A549 (cell line): ENCODE measurements at regions of chr12 and their contacts with region 1.

Region 1: GRCh38 chr12:47742253-47742825 is 16.3 kb downstream of the RAPGEF3 start:
- DNase-seq: peak; percentile 63 to 67
- ATAC-seq: peak; percentile 12 to 75; a peak in 3 of 6 replicates
- H3K4me3 ChIP-seq: no peak overlapping the region
- H3K27ac ChIP-seq: no peak overlapping the region
- H3K4me1 ChIP-seq: peaks cover 8% of the 10 kb centered on the region
- CTCF ChIP-seq: peak; percentile 98
- EP300 ChIP-seq: no peak
- POLR2A ChIP-seq: no peak
- RAD21 ChIP-seq: peak; percentile 93 to 97

Region 2: GRCh38 chr12:47251919-47252318 is 490.4 kb before region 1 on chr12:
- CTCF ChIA-PET with region 1: no interaction called
- POLR2A ChIA-PET with region 1: no interaction called
- DNase-seq: no peak
- ATAC-seq: no peak
- H3K4me3 ChIP-seq: no peak overlapping the region
- H3K27ac ChIP-seq: no peak overlapping the region
- H3K4me1 ChIP-seq: peaks cover 30% of the 10 kb centered on the region
- CTCF ChIP-seq: no peak
- EP300 ChIP-seq: no peak
- POLR2A ChIP-seq: no peak
- RAD21 ChIP-seq: no peak

Region 3: DNA sequence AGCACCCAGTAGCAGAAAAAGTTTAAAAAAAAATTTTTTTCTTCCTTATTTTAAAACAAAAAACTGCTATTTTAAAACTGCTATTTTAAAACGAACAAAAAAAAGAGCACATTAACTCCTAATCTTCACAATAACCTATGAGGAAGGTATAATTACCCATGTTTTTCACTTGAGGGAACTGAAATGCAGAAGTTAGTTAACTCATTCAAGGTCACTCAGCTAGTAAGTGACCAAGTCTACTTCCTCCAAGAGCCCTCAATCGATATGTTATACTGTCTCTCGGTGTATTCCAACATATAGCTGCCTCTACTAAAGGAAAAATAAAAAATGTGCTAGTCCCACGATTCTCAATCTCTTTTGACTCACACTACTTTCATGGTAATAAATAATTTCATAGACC is 44.3 kb before region 1 on chr12:
- CTCF ChIA-PET with region 1: no interaction called
- POLR2A ChIA-PET with region 1: no interaction called
- DNase-seq: no peak
- ATAC-seq: no peak
- H3K4me3 ChIP-seq: no peak overlapping the region
- H3K27ac ChIP-seq: no peak overlapping the region
- H3K4me1 ChIP-seq: peaks cover 3% of the 10 kb centered on the region; the same call in 1 of the 3 replicates
- CTCF ChIP-seq: no peak
- EP300 ChIP-seq: no peak
- POLR2A ChIP-seq: no peak
- RAD21 ChIP-seq: no peak

Region 4: DNA sequence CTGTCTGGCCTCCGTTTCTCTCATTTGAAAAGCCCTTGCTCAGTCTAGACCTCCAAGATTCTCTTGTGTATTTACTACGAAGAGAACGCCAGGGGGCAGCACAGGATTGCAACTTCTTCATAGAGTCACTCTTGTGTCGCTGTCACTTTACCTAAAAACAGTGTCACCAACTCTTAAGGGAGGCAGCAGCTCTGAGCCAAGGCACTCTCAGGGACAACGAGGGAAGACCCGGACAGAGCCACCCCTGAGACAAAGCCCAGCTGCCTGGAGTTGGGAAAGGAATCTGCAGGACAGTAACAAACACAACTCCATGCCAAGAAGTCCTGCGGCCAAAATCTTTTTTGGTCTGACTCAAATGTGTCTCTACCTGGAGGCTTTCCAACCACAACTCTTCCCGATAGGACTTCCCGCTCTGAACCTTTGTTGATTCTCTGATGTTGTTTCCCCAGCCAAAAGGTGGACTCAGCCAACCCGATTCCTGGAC is 26.9 kb before region 1 on chr12:
- CTCF ChIA-PET with region 1: interaction called, 336 read pairs
- POLR2A ChIA-PET with region 1: no interaction called
- DNase-seq: peak; percentile 76 to 80
- ATAC-seq: peak; percentile 56 to 82; a peak in 4 of 6 replicates
- H3K4me3 ChIP-seq: no peak overlapping the region
- H3K27ac ChIP-seq: no peak overlapping the region
- H3K4me1 ChIP-seq: peaks cover 9% of the 10 kb centered on the region
- CTCF ChIP-seq: peak; percentile 93
- EP300 ChIP-seq: no peak
- POLR2A ChIP-seq: no peak
- RAD21 ChIP-seq: peak; percentile 90 to 93

Region 5: DNA sequence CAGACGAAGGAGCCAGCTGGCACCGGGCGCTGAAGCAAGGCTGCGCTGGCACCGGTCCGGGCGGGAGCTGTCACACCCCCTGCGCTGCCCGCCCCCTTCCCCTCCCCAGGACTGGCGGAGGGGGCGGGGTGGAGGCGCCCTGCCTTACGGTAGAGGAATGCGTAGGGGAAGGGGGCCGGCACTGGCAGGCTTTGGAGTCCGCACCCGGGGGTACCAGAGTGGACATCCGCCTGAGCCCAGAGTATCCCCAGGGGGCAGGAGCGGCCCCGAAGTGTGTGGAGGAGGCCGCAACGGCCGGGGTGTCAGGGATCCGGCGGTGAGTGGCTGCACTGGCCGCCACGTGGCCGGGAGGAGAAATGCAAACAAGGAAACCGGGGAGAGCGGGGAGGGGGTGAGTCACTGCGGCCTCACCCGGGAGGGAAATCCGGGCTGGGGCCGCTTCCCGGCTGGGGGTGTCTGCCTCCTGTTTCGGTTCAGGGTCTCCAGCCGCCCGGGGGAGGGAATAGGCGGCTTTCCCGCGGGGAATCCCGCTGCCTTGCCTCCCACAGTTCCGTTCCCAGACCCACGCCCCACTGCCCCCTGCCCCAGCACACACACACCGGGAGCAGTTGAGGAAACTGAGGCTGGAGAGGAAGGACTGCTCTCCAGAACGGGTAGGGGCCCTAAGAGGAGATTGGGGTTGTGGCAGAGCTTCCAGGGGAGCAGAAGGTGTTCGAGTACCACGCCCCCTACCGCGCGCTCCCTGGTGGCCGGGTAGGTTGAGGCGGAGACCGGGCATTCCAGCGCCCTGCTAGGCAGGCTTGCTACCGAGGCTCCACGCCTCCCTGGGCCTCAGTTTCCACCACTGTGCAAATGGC is 16.7 kb after region 1 on chr12 and contains the start of gene RAPGEF3:
- CTCF ChIA-PET with region 1: interaction called, 336 read pairs
- POLR2A ChIA-PET with region 1: interaction called, 5 read pairs
- DNase-seq: peak; percentile 82 to 92
- ATAC-seq: peak; percentile 87 to 94
- H3K4me3 ChIP-seq: peak within 1 kb of the TSS; percentile 58
- H3K27ac ChIP-seq: peak within 1 kb of the TSS; percentile 80 to 94
- H3K4me1 ChIP-seq: peaks cover 10% of the 10 kb centered on the region
- CTCF ChIP-seq: peak; percentile 62
- EP300 ChIP-seq: no peak
- POLR2A ChIP-seq: peak; percentile 9; the same call in 1 of the 2 replicates
- RAD21 ChIP-seq: 0 out of 5 replicates have a peak, but pooled peaks of 1 of the 2 experiments have one; percentile 15
- polyA plus RNA-seq, gene RAPGEF3: 0.70 and 0.75 TPM in 2 replicates

Region 6: DNA sequence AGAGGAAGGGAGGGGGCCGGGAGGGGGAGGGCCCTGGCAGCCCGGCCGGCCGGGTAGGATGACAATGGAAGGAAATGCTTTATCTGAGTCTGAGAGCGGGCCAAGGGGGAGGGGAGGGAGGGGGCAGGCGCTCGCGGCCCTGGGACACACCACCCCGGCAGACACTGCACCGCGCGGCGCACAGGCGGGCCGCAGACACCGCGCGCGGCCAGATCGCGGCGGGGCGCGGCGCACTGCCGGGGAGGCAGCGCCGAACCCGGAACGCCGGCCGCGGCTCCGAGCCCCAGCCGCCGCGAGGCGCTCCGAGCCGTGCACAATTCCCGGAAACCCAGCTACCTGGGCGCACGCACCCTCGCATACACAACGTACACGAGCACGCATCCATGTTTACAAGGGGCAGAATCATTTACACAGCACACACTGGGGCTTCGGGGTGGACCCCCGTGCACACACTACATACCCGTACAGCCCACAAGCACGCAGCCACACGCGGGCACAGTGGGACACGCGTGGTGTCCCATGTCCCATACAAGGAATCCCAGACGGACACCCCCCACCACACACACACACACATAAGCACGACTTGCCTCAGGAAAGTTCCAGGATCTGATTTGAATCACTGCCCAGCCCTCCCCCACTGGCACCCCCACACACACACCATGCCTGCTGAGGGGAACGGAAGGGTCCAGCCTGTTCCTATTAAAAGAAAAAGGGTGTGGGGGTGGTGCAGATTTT is 77.7 kb after region 1 on chr12 and contains the start of gene HDAC7:
- CTCF ChIA-PET with region 1: interaction called, 29 read pairs
- POLR2A ChIA-PET with region 1: no interaction called
- DNase-seq: peak; percentile 86 to 90
- ATAC-seq: peak; percentile 52 to 74
- H3K4me3 ChIP-seq: peak within 1 kb of the TSS; percentile 89
- H3K27ac ChIP-seq: peak within 1 kb of the TSS; percentile 96 to 100
- H3K4me1 ChIP-seq: peaks cover 68% of the 10 kb centered on the region
- CTCF ChIP-seq: no peak
- EP300 ChIP-seq: 0 out of 5 replicates have a peak, but pooled peaks have one; percentile 23 to 29
- POLR2A ChIP-seq: peak; percentile 82
- RAD21 ChIP-seq: no peak
- polyA plus RNA-seq, gene HDAC7: 17.2 and 20.8 TPM in 2 replicates

Region 7: GRCh38 chr12:47886510-47887240 is 144.3 kb after region 1 on chr12:
- CTCF ChIA-PET with region 1: no interaction called
- POLR2A ChIA-PET with region 1: no interaction called
- DNase-seq: no peak
- ATAC-seq: no peak
- H3K4me3 ChIP-seq: no peak overlapping the region
- H3K27ac ChIP-seq: no peak overlapping the region
- H3K4me1 ChIP-seq: peaks cover 9% of the 10 kb centered on the region; the same call in 1 of the 3 replicates
- CTCF ChIP-seq: no peak
- EP300 ChIP-seq: no peak
- POLR2A ChIP-seq: no peak
- RAD21 ChIP-seq: no peak